Adrenal gland (tissue), 19 donors: ENCODE measurements at regions of chr4 and their contacts with region 1.

Region 1: GRCh38 chr4:99405433-99406115 is 29.6 kb downstream of the ADH7 start:
- DNase-seq: peak; percentile 54 to 87 (median 68)
- H3K4me3 ChIP-seq: no peak overlapping the region
- H3K27ac ChIP-seq: peak overlapping the region in 2 of 5 donors; percentile 42 to 71
- H3K4me1 ChIP-seq: peaks cover 0 to 8% of the 10 kb centered on the region in 2 donors
- H3K27me3 ChIP-seq: no peaks in the 10 kb centered on the region
- CTCF ChIP-seq: peak; percentile 89 to 97 (median 92)
- POLR2A ChIP-seq: no peak

Region 2: DNA sequence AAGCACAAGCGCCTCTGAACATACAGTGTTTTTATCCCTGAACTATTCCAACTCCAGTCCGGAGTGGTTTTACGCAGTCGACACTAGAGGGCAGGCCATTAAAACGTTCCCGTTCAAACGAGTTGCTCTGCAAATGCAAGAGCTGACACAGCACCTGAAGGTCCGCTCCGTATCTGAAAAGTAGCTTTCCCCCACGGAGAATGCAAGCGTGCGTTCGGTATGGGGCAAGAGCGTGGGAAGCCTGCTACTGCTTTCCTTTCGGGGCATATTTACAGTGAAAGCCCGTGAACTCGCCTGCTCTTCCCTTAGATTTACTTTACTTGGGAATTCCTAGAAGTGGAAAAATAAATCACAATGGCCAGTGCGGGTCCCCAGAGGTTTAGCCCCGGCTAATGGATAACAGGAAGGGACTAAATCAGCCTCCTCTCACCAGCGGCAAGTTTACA is 937.9 kb before region 1 on chr4:
- intact Hi-C with region 1: loop called in 1 of 2 experiments (anchors 5 kb)
- DNase-seq: peak; percentile 75 to 90 (median 81)
- H3K4me3 ChIP-seq: peak overlapping the region in 1 of 4 donors; percentile 49
- H3K27ac ChIP-seq: no peak overlapping the region
- H3K4me1 ChIP-seq: peaks cover 0 to 8% of the 10 kb centered on the region in 2 donors
- H3K27me3 ChIP-seq: no peaks in the 10 kb centered on the region
- CTCF ChIP-seq: peak; percentile 61 to 76 (median 74)
- POLR2A ChIP-seq: no peak

Region 3: GRCh38 chr4:98995183-98996055 is 410.2 kb before region 1 on chr4 and contains the start of gene METAP1:
- intact Hi-C with region 1: loop called in 1 of 2 experiments (anchors 10 kb)
- DNase-seq: peak; percentile 91 to 96 (median 94)
- H3K4me3 ChIP-seq: peak within 1 kb of the TSS; percentile 33 to 98 (median 93)
- H3K27ac ChIP-seq: peak within 1 kb of the TSS; percentile 49 to 89 (median 85)
- H3K4me1 ChIP-seq: peaks cover 0 to 16% of the 10 kb centered on the region in 2 donors
- H3K27me3 ChIP-seq: no peaks in the 10 kb centered on the region
- CTCF ChIP-seq: peak; percentile 6 to 50 (median 44)
- POLR2A ChIP-seq: peak; percentile 39 to 74
- total RNA-seq, gene METAP1: 12.1 to 35.3 (median 18.3) TPM

Region 4: DNA sequence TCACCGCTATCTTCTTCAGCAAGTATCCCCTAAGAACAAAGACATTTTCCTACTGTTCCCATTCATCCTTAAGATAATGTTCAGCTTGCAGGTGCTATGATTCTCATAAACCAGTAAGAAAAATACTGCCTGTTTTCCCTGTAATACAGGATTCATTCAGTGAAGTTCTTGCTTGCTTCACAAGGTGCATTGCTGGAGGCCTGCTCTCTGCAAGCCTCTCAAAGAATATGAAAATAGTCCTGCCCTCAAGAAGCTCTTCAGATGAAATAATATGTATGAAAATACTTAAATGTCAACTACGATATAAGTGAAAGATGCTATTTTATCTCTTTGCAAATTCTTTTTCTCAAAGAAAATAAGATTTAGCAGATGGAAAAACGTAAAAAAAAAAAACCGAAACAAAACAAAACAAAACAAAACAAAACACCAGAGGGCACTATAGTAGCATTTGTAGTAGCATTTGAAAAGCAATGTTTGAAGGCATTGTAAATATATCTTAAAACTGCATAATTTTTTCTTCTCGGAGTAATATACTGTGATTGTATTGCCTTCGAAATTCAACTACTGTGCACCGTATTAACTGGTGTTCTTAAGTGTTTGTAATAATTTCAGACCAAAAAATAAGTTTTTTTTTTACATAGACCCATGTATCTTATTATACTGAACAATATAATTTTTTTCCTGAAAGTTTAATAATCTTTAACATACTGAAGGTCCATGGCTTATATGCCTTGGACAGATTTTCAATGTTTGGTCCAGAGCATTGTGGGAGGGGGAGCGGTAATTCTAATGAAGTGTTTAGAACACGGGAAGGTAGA is 287.5 kb before region 1 on chr4:
- intact Hi-C with region 1: loop called in 1 of 2 experiments (anchors 2 kb)
- DNase-seq: no peak
- H3K4me3 ChIP-seq: no peak overlapping the region
- H3K27ac ChIP-seq: no peak overlapping the region
- H3K4me1 ChIP-seq: no peaks in the 10 kb centered on the region
- H3K27me3 ChIP-seq: no peaks in the 10 kb centered on the region
- CTCF ChIP-seq: peak in 4 of 6 experiments; percentile 19 to 54 (median 40)
- POLR2A ChIP-seq: no peak

Region 5: DNA sequence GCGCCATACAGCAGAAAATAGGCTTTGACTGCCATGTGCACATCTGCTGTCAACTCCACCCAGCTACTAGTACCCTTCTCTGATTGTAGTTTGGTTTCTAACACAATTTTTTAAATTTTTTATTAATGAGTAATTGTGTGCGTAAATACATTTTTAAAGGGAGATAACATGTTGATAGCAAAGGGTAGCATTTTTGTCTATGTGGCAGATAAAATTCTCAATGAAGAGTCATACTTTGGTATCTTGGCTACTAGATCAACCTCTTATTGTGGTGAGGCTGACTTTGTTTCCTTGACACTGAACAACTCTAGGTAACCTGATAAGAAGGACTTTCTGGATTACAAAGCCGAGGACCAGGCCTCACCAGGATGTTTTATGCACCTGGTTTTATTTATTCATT is 271.0 kb before region 1 on chr4:
- intact Hi-C with region 1: loop called in 1 of 2 experiments (anchors 10 kb)
- DNase-seq: no peak
- H3K4me3 ChIP-seq: no peak overlapping the region
- H3K27ac ChIP-seq: no peak overlapping the region
- H3K4me1 ChIP-seq: no peaks in the 10 kb centered on the region
- H3K27me3 ChIP-seq: no peaks in the 10 kb centered on the region
- CTCF ChIP-seq: no peak
- POLR2A ChIP-seq: no peak

Region 6: GRCh38 chr4:99330648-99331047 is 74.9 kb before region 1 on chr4:
- intact Hi-C with region 1: no loop called
- DNase-seq: no peak
- H3K4me3 ChIP-seq: no peak overlapping the region
- H3K27ac ChIP-seq: no peak overlapping the region
- H3K4me1 ChIP-seq: no peaks in the 10 kb centered on the region
- H3K27me3 ChIP-seq: no peaks in the 10 kb centered on the region
- CTCF ChIP-seq: no peak
- POLR2A ChIP-seq: no peak

Region 7: GRCh38 chr4:99462875-99463464 is 57.4 kb after region 1 on chr4:
- intact Hi-C with region 1: no loop called
- DNase-seq: peak; percentile 37 to 72 (median 45)
- H3K4me3 ChIP-seq: no peak overlapping the region
- H3K27ac ChIP-seq: no peak overlapping the region
- H3K4me1 ChIP-seq: no peaks in the 10 kb centered on the region
- H3K27me3 ChIP-seq: no peaks in the 10 kb centered on the region
- CTCF ChIP-seq: peak; percentile 62 to 84 (median 74)
- POLR2A ChIP-seq: no peak

Region 8: DNA sequence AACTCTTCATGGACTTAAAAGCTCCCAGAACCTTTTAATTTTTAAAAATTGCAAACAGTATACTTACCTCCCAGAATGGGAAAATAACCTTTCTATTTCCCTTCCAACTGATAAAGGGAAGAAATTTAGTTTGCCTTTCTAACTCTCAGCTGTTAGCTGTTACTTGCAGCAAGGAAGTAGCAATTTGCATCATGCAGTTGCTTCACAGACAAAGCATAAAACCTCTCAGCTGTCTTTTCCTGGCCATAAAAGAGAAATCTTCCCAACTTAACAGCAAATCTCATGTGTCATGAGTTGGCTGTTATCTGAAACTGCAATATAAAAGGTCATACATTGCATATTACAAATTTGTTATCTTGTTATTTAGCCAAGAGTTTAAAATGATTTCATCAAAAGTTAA is 123.7 kb after region 1 on chr4:
- intact Hi-C with region 1: no loop called
- DNase-seq: no peak
- H3K4me3 ChIP-seq: no peak overlapping the region
- H3K27ac ChIP-seq: no peak overlapping the region
- H3K4me1 ChIP-seq: no peaks in the 10 kb centered on the region
- H3K27me3 ChIP-seq: no peaks in the 10 kb centered on the region
- CTCF ChIP-seq: no peak
- POLR2A ChIP-seq: no peak

Region 9: GRCh38 chr4:99540287-99540939 is 134.8 kb after region 1 on chr4:
- intact Hi-C with region 1: no loop called
- DNase-seq: no peak
- H3K4me3 ChIP-seq: no peak overlapping the region
- H3K27ac ChIP-seq: no peak overlapping the region
- H3K4me1 ChIP-seq: no peaks in the 10 kb centered on the region
- H3K27me3 ChIP-seq: no peaks in the 10 kb centered on the region
- CTCF ChIP-seq: no peak
- POLR2A ChIP-seq: no peak